H1 (cell line): ENCODE measurements at regions of chr17 and their contacts with region 1.

Region 1: DNA sequence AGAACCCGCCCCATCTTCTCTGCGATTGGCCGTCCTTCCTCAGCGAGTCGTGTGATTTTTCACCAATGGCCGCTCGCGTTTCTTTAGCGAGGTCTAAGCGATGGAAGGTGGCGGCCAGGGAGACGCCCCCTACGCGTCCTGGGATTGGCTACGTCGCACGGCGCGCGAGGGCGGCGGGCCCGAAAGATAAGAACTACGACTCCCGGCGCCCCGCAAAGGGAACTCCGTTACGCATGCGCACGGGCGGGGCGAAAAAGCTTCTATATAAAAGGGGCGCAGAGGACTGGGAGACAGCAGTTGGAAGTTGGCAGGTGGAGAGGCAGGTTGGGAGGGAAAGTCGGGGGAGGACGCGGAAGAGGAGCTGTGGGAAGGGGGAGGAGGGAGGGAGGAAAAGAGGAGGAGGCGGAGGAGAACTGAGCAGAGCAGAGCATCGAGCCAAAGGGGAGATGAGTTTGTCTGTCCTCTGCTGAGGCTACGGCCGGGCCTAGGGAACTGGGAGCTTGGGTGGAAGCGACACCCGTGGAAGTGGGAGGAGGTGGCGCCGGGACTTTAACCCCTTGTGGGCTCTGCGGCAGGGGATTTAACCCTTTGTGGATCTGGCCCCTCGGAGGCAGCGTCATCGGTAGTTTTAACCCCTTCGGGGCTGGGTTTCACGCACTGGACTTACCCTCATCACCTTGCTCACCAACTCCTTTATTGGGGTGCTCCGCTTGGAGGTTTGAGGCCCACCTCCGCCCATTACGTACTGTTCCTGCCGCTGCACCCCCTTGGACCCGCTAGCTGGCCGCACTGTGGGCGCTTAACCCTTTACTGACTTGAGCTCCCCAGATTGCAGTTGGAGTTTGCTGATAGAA is at the start of gene HEXIM1:
- DNase-seq: peak; percentile 98 to 100
- H3K4me3 ChIP-seq: peak within 1 kb of the TSS; percentile 77 to 93 (median 88)
- H3K27ac ChIP-seq: peak within 1 kb of the TSS; percentile 99
- H3K4me1 ChIP-seq: peaks cover 3 to 17% (median 13%) of the 10 kb centered on the region in 4 experiments
- H3K27me3 ChIP-seq: no peaks in the 10 kb centered on the region
- CTCF ChIP-seq: no peak
- EP300 ChIP-seq: no peak
- POLR2A ChIP-seq: peak; percentile 99 to 100
- RAD21 ChIP-seq: no peak
- total RNA-seq, gene HEXIM1: 36.9 and 38.3 TPM in 2 replicates

Region 2: GRCh38 chr17:44738214-44738906 is 410.1 kb before region 1 on chr17:
- CTCF ChIA-PET with region 1: no interaction called
- POLR2A ChIA-PET with region 1: no interaction called
- DNase-seq: no peak
- H3K4me3 ChIP-seq: no peak overlapping the region
- H3K27ac ChIP-seq: no peak overlapping the region
- H3K4me1 ChIP-seq: peaks cover 2 to 6% (median 3%) of the 10 kb centered on the region in 4 experiments; a peak in 4 of 7 replicates
- H3K27me3 ChIP-seq: no peaks in the 10 kb centered on the region
- CTCF ChIP-seq: no peak
- EP300 ChIP-seq: no peak
- POLR2A ChIP-seq: no peak
- RAD21 ChIP-seq: no peak

Region 3: DNA sequence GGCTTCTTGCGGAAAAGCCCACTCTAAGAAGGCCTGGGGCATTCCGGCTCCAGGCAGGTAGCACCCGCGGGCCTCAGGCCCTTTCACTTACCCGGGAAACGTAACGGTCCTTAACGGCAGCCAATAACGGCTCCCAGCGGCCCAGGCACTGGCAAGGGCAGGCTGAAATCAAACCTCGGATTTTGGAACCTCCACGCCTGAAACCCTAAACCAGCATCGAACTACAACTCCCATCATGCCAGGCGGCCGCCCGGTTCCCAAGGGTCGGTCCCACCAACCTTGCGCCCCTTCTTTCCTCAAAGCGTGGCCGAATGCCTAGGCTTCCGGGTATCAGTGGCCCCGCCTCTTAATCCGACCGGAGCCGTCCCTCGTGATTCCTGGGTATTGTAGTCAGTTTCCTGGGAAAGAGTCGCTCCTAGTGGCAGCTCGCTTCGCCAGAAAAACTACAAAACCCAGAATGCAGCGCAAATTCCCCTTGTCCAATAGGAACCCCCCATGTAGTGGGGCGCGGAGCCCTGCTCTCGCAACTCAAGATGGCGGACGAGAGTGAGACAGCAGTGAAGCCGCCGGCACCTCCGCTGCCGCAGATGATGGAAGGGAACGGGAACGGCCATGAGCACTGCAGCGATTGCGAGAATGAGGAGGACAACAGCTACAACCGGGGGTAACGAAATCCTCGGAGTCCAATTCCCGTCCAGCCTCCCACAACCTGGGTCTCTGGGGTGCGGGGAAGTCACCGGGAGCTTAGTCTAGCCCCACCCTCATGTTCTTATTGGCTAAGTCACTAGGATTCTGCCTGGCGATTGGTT is 87.4 kb before region 1 on chr17 and contains the start of gene NMT1:
- CTCF ChIA-PET with region 1: no interaction called
- POLR2A ChIA-PET with region 1: interaction called, 12 read pairs
- DNase-seq: peak; percentile 94 to 96
- H3K4me3 ChIP-seq: peak within 1 kb of the TSS; percentile 80 to 100 (median 96)
- H3K27ac ChIP-seq: peak within 1 kb of the TSS; percentile 98
- H3K4me1 ChIP-seq: no peaks in the 10 kb centered on the region; a peak in 2 of 7 replicates
- H3K27me3 ChIP-seq: no peaks in the 10 kb centered on the region
- CTCF ChIP-seq: peak in 1 of 3 experiments; percentile 2; a peak in 1 of 4 replicates
- EP300 ChIP-seq: no peak
- POLR2A ChIP-seq: peak; percentile 90 to 97
- RAD21 ChIP-seq: no peak
- total RNA-seq, gene NMT1: 149 and 152 TPM in 2 replicates

Region 4: GRCh38 chr17:45161019-45161825 is 12.8 kb after region 1 on chr17:
- CTCF ChIA-PET with region 1: interaction called, 115 read pairs
- POLR2A ChIA-PET with region 1: interaction called, 1,076 read pairs
- DNase-seq: peak; percentile 99
- H3K4me3 ChIP-seq: peak overlapping the region; percentile 73 to 97 (median 88)
- H3K27ac ChIP-seq: peak overlapping the region; percentile 99
- H3K4me1 ChIP-seq: peaks cover 0 to 9% (median 3%) of the 10 kb centered on the region in 4 experiments; a peak in 3 of 7 replicates
- H3K27me3 ChIP-seq: no peaks in the 10 kb centered on the region
- CTCF ChIP-seq: peak in 1 of 3 experiments; percentile 52; a peak in 1 of 4 replicates
- EP300 ChIP-seq: 0 out of 3 replicates have a peak, but pooled peaks of 1 of the 2 experiments have one; percentile 21
- POLR2A ChIP-seq: peak; percentile 98 to 100
- RAD21 ChIP-seq: peak in 1 of 2 experiments; percentile 24; a peak in 1 of 4 replicates

Region 5: GRCh38 chr17:45190503-45191255 is 42.3 kb after region 1 on chr17:
- CTCF ChIA-PET with region 1: interaction called, 187 read pairs
- POLR2A ChIA-PET with region 1: interaction called, 199 read pairs
- DNase-seq: no peak
- H3K4me3 ChIP-seq: no peak overlapping the region
- H3K27ac ChIP-seq: no peak overlapping the region
- H3K4me1 ChIP-seq: no peaks in the 10 kb centered on the region
- H3K27me3 ChIP-seq: no peaks in the 10 kb centered on the region
- CTCF ChIP-seq: no peak
- EP300 ChIP-seq: no peak
- POLR2A ChIP-seq: no peak
- RAD21 ChIP-seq: no peak

Region 6: GRCh38 chr17:45228763-45229539 is 80.5 kb after region 1 on chr17:
- CTCF ChIA-PET with region 1: interaction called, 6 read pairs
- POLR2A ChIA-PET with region 1: interaction called, 18 read pairs
- DNase-seq: no peak
- H3K4me3 ChIP-seq: no peak overlapping the region
- H3K27ac ChIP-seq: no peak overlapping the region
- H3K4me1 ChIP-seq: peaks cover 5 to 29% (median 20%) of the 10 kb centered on the region in 4 experiments
- H3K27me3 ChIP-seq: peaks cover 0 to 5% (median under 1%) of the 10 kb centered on the region in 4 experiments; a peak in 3 of 7 replicates
- CTCF ChIP-seq: no peak
- EP300 ChIP-seq: no peak
- POLR2A ChIP-seq: no peak
- RAD21 ChIP-seq: no peak

Region 7: DNA sequence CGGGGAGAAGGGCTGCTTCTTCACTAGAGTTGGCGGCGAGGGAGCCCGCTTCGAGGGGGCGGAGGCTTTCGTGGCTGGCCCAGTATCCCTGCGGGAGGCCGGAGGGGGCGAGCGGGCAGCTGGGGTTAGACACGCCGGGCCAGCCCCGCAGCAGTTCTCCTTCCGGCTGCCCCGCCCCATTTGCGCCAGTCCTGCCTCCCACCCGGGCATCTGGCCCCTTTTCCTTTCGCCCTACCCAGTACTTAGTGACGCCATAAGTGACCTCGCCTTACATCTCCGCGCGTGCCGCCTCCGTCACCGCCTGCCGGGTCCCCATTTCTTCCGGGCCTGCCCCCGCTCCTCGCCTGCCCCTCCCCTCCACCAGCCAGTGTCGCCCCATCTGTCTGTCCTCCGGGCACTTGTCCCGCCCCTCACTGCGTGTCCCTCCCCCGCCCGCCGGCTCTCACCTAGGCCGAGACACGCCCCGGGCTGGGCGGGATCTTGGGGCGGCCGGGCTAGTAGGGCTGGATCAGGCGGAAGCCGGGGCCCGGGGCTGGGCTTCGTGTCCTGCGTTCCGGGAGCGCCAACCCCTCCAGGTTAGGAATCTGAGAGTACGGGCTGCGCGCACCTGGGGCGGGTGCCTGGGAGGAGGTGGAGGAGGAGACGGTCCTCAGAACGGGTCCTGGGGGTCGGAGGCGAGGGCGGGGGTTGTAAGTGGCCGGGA is 99.2 kb after region 1 on chr17:
- CTCF ChIA-PET with region 1: interaction called, 4 read pairs
- POLR2A ChIA-PET with region 1: interaction called, 24 read pairs
- DNase-seq: peak; percentile 94 to 97
- H3K4me3 ChIP-seq: peak overlapping the region; percentile 70 to 82 (median 74)
- H3K27ac ChIP-seq: peak overlapping the region; percentile 71
- H3K4me1 ChIP-seq: peaks cover 3 to 15% (median 12%) of the 10 kb centered on the region in 4 experiments
- H3K27me3 ChIP-seq: no peaks in the 10 kb centered on the region; a peak in 2 of 7 replicates
- CTCF ChIP-seq: no peak
- EP300 ChIP-seq: peak in 1 of 2 experiments; percentile 53; a peak in 1 of 3 replicates
- POLR2A ChIP-seq: peak in 1 of 2 experiments; percentile 81; a peak in 2 of 3 replicates
- RAD21 ChIP-seq: no peak